ENCODE measurements at regions of chr6 and their contacts with region 1.

Region 1: DNA sequence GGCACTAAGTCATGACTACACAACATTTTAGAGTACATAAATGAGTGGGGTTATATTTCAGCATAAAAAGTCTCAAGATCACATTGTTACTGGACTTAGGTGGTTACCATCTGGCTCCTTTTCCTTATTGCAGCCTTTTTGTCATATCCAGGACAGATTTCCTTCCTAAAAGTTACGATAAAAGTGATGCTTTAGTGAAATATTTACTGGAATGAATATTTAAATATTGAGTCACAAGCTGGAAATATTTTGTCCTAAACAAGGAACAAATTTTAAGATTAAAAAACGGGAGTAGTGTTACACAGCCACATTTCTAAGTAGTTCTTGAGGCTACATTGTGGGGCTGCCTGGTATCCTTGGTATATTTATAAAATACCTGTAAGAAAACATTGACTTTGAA is 52.2 kb downstream of the CDC40 start:
- DNase-seq: no peak
- ATAC-seq: no peak
- H3K4me3 ChIP-seq: no peak overlapping the region
- H3K27ac ChIP-seq: no peak overlapping the region
- H3K4me1 ChIP-seq: no peaks in the 10 kb centered on the region
- H3K27me3 ChIP-seq: no peaks in the 10 kb centered on the region
- CTCF ChIP-seq: no peak

Region 2: GRCh38 chr6:110214338-110214737 is 18.1 kb before region 1 on chr6:
- CTCF ChIA-PET with region 1: no interaction called
- POLR2A ChIA-PET with region 1: interaction called, 10 read pairs
- in situ Hi-C with region 1: no loop called
- intact Hi-C with region 1: no loop called
- DNase-seq: no peak
- ATAC-seq: no peak
- H3K4me3 ChIP-seq: no peak overlapping the region
- H3K27ac ChIP-seq: no peak overlapping the region
- H3K4me1 ChIP-seq: no peaks in the 10 kb centered on the region
- H3K27me3 ChIP-seq: no peaks in the 10 kb centered on the region
- CTCF ChIP-seq: no peak

Region 3: DNA sequence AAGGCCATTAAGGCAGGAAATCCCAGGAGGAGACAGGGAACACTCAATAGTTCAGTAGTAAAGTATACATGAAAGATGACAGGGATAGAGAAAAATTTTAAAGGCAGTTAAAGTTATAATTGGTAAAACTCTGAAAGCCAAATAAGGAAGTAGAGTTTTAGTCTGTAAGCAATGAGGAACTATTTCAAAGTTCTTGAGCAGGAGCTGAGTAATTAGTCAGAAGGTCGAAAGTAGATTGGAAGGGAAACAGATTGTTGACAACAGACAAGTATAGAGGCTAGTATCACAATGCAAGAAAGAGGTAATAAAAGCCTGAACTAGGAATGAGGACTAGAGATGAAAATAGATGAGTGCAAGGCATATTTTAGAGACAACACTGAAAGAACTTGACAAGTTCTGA is 432.5 kb after region 1 on chr6:
- CTCF ChIA-PET with region 1: no interaction called
- POLR2A ChIA-PET with region 1: no interaction called
- in situ Hi-C with region 1: no loop called
- intact Hi-C with region 1: no loop called
- DNase-seq: no peak
- ATAC-seq: no peak
- H3K4me3 ChIP-seq: no peak overlapping the region
- H3K27ac ChIP-seq: peak overlapping the region; percentile 1; the same call in 1 of the 2 replicates
- H3K4me1 ChIP-seq: no peaks in the 10 kb centered on the region
- H3K27me3 ChIP-seq: no peaks in the 10 kb centered on the region
- CTCF ChIP-seq: no peak